ENCODE measurements at regions of chr17 and their contacts with region 1.

Region 1: GRCh38 chr17:19766422-19767270 is 18.5 kb upstream of the ALDH3A1 start:
- DNase-seq: peak; percentile 80
- ATAC-seq: peak; percentile 92
- H3K4me3 Mint-ChIP-seq: no peak overlapping the region
- H3K27ac Mint-ChIP-seq: no peak overlapping the region
- H3K4me1 Mint-ChIP-seq: peaks cover 2% of the 10 kb centered on the region
- H3K27me3 Mint-ChIP-seq: no peaks in the 10 kb centered on the region
- CTCF ChIP-seq: no peak

Region 2: DNA sequence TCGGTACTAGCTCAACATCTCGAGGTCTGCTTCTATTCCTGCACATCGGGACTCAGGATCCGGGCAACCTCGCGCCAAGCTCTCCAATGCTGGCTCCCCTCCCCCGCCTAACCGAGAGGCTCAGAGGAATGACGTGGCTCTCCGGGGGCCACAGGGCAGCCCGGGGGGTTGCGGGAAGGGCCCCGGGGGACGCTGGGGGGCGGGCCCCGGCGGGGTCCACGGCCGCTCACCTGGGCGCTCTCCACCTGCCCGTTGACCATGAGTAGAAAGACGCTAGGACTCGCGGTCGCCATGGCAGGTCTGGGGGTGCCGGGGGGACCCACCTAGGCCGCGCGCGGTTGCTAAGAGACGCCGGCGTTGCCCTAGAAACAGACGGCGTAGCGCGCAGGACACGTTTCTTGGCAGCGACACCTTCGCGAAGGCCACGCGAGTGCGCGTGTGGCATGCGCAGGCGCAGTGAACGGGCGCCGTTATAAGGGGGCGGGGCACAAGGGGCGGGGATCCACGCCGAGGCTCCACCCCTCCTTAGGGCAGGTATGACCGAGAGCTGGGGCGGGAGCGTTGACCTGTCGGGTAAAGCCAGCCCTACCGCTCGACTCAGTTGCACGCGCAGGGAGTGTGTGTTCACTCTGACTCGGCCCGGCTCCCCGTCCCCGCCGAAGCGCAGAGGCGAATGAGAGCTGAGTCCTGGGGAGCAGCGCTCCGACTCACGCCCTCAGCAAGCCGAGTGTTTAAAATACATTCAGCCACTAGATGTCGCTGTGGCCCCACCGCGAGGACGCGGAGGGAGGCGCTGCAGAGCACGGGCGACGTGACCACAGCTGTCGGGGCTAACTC is 404.2 kb before region 1 on chr17 and contains the start of gene B9D1:
- CTCF ChIA-PET with region 1: interaction called, 30 read pairs
- POLR2A ChIA-PET with region 1: interaction called, 4 read pairs
- intact Hi-C with region 1: loop called (anchors 1 kb)
- DNase-seq: peak; percentile 85
- ATAC-seq: peak; percentile 92
- H3K4me3 Mint-ChIP-seq: peak within 1 kb of the TSS; percentile 93
- H3K27ac Mint-ChIP-seq: peak within 1 kb of the TSS; percentile 87
- H3K4me1 Mint-ChIP-seq: peaks cover 7% of the 10 kb centered on the region
- H3K27me3 Mint-ChIP-seq: peaks cover 4% of the 10 kb centered on the region
- CTCF ChIP-seq: peak; percentile 98
- total RNA-seq, gene B9D1: 3.3 and 6.7 TPM in 2 replicates

Region 3: GRCh38 chr17:19513897-19514488 is 252.7 kb before region 1 on chr17:
- CTCF ChIA-PET with region 1: interaction called, 76 read pairs
- POLR2A ChIA-PET with region 1: interaction called, 3 read pairs
- intact Hi-C with region 1: loop called (anchors 1 kb)
- DNase-seq: peak; percentile 54
- ATAC-seq: peak; percentile 85
- H3K4me3 Mint-ChIP-seq: no peak overlapping the region
- H3K27ac Mint-ChIP-seq: no peak overlapping the region
- H3K4me1 Mint-ChIP-seq: peaks cover 8% of the 10 kb centered on the region
- H3K27me3 Mint-ChIP-seq: no peaks in the 10 kb centered on the region
- CTCF ChIP-seq: peak; percentile 92

Region 4: DNA sequence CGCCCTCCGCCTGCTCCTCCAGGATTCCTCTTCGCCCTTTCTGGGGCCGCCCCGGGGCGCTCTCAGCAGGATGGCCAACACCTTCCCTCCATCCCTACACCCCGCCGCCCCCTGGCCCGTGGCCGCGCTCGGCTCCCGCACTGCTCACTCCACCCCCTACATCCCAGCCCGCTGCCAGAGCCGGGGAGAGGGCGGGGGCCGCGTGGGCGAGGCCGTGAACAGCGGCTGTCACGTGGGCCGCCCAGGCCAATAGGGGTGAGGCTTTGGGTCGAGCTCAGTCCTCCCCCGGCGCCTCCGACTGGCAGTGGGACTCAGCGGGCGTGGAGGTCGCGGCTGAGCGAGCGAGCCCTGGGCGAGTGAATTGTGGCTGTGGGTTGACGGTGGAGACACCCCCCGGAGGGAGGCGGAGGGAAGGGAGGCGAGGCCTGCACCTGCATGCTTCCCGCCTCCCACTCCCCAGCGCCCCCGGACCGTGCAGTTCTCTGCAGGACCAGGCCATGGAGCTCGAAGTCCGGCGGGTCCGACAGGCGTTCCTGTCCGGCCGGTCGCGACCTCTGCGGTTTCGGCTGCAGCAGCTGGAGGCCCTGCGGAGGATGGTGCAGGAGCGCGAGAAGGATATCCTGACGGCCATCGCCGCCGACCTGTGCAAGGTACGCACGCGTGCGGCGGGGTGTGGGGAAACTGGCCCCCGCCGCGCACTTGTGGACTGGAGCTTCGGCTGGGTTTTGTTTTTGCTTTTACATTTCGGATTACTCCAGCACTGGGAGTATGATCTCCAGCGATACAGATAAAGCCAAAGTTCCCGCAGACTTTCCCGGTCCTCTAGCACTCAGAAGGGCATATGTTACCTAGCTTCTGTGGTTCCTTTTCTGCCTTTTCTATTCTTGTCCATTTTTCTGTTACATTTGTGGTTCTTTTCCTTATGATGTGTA is 117.9 kb before region 1 on chr17 and contains the start of gene ALDH3A2:
- CTCF ChIA-PET with region 1: interaction called, 18 read pairs
- POLR2A ChIA-PET with region 1: interaction called, 22 read pairs
- intact Hi-C with region 1: no loop called
- DNase-seq: peak; percentile 91
- ATAC-seq: peak; percentile 95
- H3K4me3 Mint-ChIP-seq: peak within 1 kb of the TSS; percentile 93
- H3K27ac Mint-ChIP-seq: peak within 1 kb of the TSS; percentile 95
- H3K4me1 Mint-ChIP-seq: peaks cover 35% of the 10 kb centered on the region
- H3K27me3 Mint-ChIP-seq: peaks cover 2% of the 10 kb centered on the region
- CTCF ChIP-seq: no peak
- total RNA-seq, gene ALDH3A2: 18.3 and 19.3 TPM in 2 replicates

Region 5: DNA sequence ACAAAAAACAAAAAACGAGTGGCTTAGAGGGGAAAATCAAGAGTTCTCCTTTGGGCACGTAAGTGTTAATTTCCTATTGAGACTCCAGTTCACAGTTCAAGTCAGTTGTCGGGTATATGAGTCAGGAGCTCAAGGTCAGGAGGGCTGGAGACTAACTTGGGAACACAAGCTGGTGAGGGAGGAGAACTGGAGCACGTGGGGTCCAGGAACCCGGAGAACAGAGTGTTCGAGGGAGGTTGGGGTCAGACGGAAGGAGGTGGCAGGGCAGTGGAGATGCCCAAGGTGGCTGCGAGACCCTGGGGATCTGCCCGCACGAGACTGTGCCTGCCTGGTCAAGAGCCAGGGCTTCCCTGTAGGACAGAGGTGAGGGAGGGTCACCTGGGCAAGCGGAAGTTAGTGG is 30.6 kb before region 1 on chr17:
- CTCF ChIA-PET with region 1: no interaction called
- POLR2A ChIA-PET with region 1: no interaction called
- intact Hi-C with region 1: no loop called
- DNase-seq: no peak
- ATAC-seq: no peak
- H3K4me3 Mint-ChIP-seq: no peak overlapping the region
- H3K27ac Mint-ChIP-seq: no peak overlapping the region
- H3K4me1 Mint-ChIP-seq: no peaks in the 10 kb centered on the region
- H3K27me3 Mint-ChIP-seq: peaks cover 3% of the 10 kb centered on the region
- CTCF ChIP-seq: no peak

Region 6: DNA sequence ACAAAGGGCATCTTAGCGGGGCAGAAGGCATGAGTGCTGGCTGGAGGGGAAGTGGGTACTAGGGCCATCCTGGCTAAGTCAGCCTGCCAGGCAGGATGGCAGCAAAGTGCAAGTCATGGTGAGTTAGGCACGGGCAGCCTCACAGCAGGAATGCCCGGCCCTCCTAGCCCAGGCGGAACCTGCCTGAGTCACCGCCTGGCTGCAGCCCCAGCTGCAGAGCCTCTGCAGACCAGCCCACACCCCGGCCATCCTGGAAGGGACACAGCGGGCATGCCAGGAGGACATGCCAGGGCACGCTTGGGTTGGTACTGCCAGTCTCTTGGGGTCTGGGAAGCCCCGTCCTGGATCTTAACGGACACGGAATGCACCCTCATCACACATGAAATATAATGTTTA is 13.6 kb before region 1 on chr17:
- CTCF ChIA-PET with region 1: interaction called, 33 read pairs
- POLR2A ChIA-PET with region 1: interaction called, 4 read pairs
- intact Hi-C with region 1: no loop called
- DNase-seq: no peak
- ATAC-seq: no peak
- H3K4me3 Mint-ChIP-seq: no peak overlapping the region
- H3K27ac Mint-ChIP-seq: no peak overlapping the region
- H3K4me1 Mint-ChIP-seq: peaks cover 45% of the 10 kb centered on the region
- H3K27me3 Mint-ChIP-seq: peaks cover 15% of the 10 kb centered on the region
- CTCF ChIP-seq: no peak

Measured in activated B cell treated with CpG ODN at 0.5 μM for 24 hours (primary cell).